Activated naive CD4-positive, alpha-beta T cell treated with anti-CD3 and anti-CD28 coated beads for 36 hours (primary cell): ENCODE measurements at regions of chr20 and their contacts with region 1.

Region 1: DNA sequence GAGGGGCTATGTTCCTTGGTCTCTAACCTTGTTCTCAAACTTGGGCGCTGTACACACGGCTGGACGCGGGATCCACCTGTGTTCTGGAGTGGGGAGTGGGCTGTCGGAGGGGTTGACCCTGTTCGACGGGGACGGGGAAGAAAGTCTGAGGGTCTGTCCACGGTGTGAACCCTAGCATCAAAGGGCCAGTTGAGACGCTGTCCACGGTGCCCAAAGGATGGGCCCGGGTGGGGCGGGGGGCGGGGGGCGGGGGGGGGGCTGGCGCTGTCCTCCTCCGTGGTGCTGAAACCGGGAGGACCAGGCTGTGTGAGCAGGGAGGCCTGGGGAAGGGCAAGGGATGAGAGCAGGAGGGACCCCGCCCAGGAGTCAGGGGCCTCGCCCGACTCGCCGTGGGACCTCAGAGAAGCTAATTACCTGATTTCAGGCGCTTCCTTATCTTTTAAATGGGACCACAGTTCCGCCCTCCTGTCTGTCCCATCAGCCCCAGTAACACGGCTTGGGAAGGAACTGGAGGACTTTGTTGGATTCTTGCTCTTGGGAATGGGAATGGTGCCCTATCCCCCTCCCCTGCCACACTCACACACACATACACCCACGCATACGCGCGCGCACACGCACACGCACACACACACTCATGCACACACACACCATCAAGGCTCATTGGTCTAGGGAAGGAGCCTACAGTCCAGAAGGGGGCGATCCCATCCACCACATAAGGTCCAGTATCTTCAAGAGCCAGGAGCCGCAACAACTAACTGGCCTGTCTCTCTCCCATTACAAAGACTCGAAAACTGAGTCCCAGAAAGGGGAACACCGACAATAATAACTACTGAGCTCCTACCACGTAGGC is 1.0 kb upstream of the VSTM2L start:
- DNase-seq: peak; percentile 61
- H3K4me3 Mint-ChIP-seq: peak overlapping the region; percentile 26
- H3K27ac Mint-ChIP-seq: no peak overlapping the region
- H3K4me1 Mint-ChIP-seq: peaks cover 13% of the 10 kb centered on the region
- H3K27me3 Mint-ChIP-seq: peaks cover 62% of the 10 kb centered on the region

Region 2: DNA sequence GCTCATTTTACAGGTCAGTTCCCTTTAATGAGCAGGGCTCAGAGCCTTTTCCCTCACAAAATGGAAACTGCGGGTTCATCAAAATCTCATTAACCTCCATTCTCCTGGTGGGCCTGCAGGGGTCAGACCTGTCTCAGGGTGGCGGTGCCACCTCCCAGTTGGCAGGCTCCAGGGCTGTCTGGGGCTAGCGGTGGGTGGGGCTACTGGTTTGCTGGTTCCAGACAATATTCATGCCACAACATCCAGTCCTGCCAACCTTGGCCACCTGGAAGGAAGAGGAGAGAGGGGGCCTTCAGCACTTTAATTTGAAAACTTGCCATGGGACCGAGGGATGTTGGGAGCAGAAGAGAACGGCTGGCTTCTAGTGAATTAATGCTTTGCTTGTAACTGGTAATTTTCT is 249.9 kb before region 1 on chr20:
- CTCF ChIA-PET with region 1: no interaction called
- intact Hi-C with region 1: loop called (anchors 5 kb)
- DNase-seq: peak; percentile 48
- H3K4me3 Mint-ChIP-seq: no peak overlapping the region
- H3K27ac Mint-ChIP-seq: no peak overlapping the region
- H3K4me1 Mint-ChIP-seq: no peaks in the 10 kb centered on the region
- H3K27me3 Mint-ChIP-seq: peaks cover 22% of the 10 kb centered on the region

Region 3: GRCh38 chr20:38573413-38573812 is 671.5 kb after region 1 on chr20:
- CTCF ChIA-PET with region 1: no interaction called
- intact Hi-C with region 1: no loop called
- DNase-seq: no peak
- H3K4me3 Mint-ChIP-seq: no peak overlapping the region
- H3K27ac Mint-ChIP-seq: no peak overlapping the region
- H3K4me1 Mint-ChIP-seq: no peaks in the 10 kb centered on the region
- H3K27me3 Mint-ChIP-seq: no peaks in the 10 kb centered on the region